Activated naive CD4-positive, alpha-beta T cell treated with anti-CD3 and anti-CD28 coated beads for 36 hours (primary cell): ENCODE measurements at regions of chr3 and their contacts with region 1.

Region 1: DNA sequence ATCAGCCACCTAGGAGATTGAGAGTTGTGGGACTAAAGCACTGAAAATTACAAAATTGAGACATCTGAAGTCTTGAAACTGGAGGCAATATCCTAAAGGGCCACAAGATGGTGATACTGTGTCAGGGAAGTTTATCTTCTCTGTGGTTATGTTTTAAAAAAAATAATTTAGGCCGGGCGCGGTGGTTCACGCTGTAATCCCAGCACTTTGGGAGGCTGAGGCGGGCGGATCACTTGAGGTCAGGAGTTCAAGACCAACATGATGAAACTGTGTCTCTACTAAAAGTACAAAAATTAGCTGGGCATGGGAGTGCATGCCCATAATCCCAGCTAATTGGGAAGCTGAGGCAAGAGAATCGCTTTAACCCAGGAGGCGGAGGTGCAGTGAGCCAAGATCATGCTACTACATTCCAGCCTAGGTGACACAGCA is 17.9 kb upstream of the NIT2 start:
- DNase-seq: peak; percentile 55
- H3K4me3 Mint-ChIP-seq: peak overlapping the region; percentile 18
- H3K27ac Mint-ChIP-seq: no peak overlapping the region
- H3K4me1 Mint-ChIP-seq: peaks cover 13% of the 10 kb centered on the region
- H3K27me3 Mint-ChIP-seq: no peaks in the 10 kb centered on the region

Region 2: GRCh38 chr3:100068826-100069225 is 247.8 kb before region 1 on chr3:
- CTCF ChIA-PET with region 1: interaction called, 3 read pairs
- intact Hi-C with region 1: loop called (anchors 5 kb)
- DNase-seq: peak; percentile 90
- H3K4me3 Mint-ChIP-seq: no peak overlapping the region
- H3K27ac Mint-ChIP-seq: no peak overlapping the region
- H3K4me1 Mint-ChIP-seq: peaks cover 30% of the 10 kb centered on the region
- H3K27me3 Mint-ChIP-seq: no peaks in the 10 kb centered on the region

Region 3: GRCh38 chr3:100463002-100463401 is 146.3 kb after region 1 on chr3:
- CTCF ChIA-PET with region 1: interaction called, 9 read pairs
- intact Hi-C with region 1: loop called (anchors 1 kb)
- DNase-seq: peak; percentile 27
- H3K4me3 Mint-ChIP-seq: no peak overlapping the region
- H3K27ac Mint-ChIP-seq: no peak overlapping the region
- H3K4me1 Mint-ChIP-seq: peaks cover 5% of the 10 kb centered on the region
- H3K27me3 Mint-ChIP-seq: peaks cover 3% of the 10 kb centered on the region

Region 4: DNA sequence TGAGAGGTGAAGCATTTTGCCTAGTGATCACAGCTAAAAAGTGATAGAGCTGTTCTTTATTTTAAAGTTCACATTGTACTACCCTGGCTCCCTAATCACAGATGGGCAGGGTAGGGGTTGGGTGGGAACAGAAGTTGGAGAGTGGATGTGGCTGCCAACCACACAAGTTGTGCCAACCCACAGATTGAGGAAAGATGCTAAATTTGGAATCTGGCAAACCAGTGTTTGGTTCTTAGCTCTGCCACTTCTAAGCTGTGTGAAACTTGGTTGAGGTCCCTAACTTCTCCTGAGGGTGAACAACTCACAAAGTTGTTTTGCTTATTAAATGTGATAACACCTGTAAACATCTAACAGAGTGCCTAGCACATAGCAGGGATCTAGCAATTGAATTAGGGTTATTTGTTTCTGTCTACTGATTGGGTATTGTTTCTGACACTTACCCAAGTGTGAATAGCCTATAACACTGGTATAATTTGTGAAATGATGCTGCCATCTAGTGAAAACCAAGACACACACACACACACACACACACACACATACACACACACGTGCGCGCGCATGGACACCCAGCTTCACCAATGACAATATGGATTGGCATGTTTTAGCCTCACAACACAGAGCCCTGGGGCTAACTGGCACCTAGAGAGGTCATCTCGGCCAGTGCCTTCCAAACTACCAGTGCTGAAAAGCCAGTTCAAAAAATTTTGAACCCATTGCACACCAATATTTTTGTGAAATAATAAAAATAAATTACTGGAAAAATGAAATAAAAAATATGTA is 318.0 kb after region 1 on chr3:
- CTCF ChIA-PET with region 1: no interaction called
- intact Hi-C with region 1: loop called (anchors 1 kb)
- DNase-seq: peak; percentile 59
- H3K4me3 Mint-ChIP-seq: no peak overlapping the region
- H3K27ac Mint-ChIP-seq: no peak overlapping the region
- H3K4me1 Mint-ChIP-seq: no peaks in the 10 kb centered on the region
- H3K27me3 Mint-ChIP-seq: peaks cover 7% of the 10 kb centered on the region

Region 5: DNA sequence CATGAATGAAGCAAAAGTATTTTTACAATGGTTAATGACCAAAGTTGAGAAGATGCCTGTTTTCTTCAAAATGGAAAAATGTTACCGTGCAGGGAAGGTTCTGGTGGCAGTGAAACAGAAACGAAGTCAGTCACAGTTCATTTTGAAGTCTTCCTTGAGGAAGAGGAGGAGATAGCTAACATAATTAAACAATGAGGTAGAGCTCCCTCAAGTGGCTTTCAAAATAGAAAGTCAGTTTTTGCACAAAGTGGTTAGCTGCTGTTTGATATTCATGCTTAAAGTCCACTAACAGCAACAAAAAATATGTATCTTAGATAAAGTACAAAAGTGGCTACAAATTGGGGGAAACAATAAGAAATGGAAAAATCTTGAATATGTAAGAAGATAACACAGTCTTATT is 479.9 kb after region 1 on chr3:
- CTCF ChIA-PET with region 1: no interaction called
- intact Hi-C with region 1: loop called (anchors 1 kb)
- DNase-seq: no peak
- H3K4me3 Mint-ChIP-seq: peak overlapping the region; percentile 27
- H3K27ac Mint-ChIP-seq: no peak overlapping the region
- H3K4me1 Mint-ChIP-seq: peaks cover 5% of the 10 kb centered on the region
- H3K27me3 Mint-ChIP-seq: no peaks in the 10 kb centered on the region